ENCODE measurements at regions of chr17 and their contacts with region 1.

Region 1: GRCh38 chr17:44356241-44356640 is 7.4 kb downstream of the FAM171A2 start:
- DNase-seq: no peak
- H3K4me3 ChIP-seq: no peak overlapping the region
- CTCF ChIP-seq: no peak

Region 2: DNA sequence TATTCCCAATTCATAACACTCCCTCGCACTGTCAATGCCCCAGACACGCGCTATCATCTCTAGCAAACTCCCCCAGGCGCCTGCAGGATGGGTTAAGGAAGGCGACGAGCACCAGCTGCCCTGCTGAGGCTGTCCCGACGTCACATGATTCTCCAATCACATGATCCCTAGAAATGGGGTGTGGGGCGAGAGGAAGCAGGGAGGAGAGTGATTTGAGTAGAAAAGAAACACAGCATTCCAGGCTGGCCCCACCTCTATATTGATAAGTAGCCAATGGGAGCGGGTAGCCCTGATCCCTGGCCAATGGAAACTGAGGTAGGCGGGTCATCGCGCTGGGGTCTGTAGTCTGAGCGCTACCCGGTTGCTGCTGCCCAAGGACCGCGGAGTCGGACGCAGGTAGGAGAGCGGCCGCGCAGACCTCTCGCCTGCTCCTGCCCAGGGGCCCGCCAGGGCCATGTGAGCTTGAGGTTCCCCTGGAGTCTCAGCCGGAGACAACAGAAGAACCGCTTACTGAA is 11.2 kb before region 1 on chr17 and contains the start of gene GRN:
- CTCF ChIA-PET with region 1: interaction called, 165 read pairs
- POLR2A ChIA-PET with region 1: interaction called, 3 read pairs
- DNase-seq: peak; percentile 93
- H3K4me3 ChIP-seq: peak within 1 kb of the TSS; percentile 95
- CTCF ChIP-seq: no peak

Region 3: DNA sequence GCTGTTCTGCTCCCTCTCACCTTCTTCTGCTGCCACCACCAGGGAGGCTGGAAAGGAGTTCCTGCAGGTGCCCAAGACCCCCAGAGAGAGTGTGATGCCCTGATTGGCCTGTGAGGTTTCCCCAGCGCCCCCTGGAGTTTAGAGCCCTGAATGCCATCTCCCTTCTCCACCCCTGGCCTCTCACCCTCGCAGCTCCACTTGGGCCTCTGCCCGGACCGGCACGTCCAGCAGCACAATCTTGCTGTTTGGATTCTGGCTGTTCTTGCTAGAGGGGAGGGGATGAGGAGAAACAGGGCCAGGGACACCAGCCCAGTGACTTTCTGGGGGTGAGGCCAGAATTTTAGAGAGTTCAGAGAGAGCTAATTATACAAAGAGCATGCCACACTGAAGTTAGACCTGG is 19.9 kb after region 1 on chr17:
- CTCF ChIA-PET with region 1: interaction called, 24 read pairs
- POLR2A ChIA-PET with region 1: no interaction called
- DNase-seq: no peak
- H3K4me3 ChIP-seq: no peak overlapping the region
- CTCF ChIP-seq: peak; percentile 38